Activated CD4-positive, alpha-beta T cell treated with anti-CD3 and anti-CD28 coated beads for 36 hours (primary cell): ENCODE measurements at regions of chr13 and their contacts with region 1.

Region 1: GRCh38 chr13:108508263-108508662 is 121.1 kb upstream of the MYO16 start:
- DNase-seq: no peak
- ATAC-seq: no peak
- H3K4me3 Mint-ChIP-seq: no peak overlapping the region
- H3K27ac Mint-ChIP-seq: no peak overlapping the region
- H3K4me1 Mint-ChIP-seq: no peaks in the 10 kb centered on the region
- H3K27me3 Mint-ChIP-seq: no peaks in the 10 kb centered on the region

Region 2: DNA sequence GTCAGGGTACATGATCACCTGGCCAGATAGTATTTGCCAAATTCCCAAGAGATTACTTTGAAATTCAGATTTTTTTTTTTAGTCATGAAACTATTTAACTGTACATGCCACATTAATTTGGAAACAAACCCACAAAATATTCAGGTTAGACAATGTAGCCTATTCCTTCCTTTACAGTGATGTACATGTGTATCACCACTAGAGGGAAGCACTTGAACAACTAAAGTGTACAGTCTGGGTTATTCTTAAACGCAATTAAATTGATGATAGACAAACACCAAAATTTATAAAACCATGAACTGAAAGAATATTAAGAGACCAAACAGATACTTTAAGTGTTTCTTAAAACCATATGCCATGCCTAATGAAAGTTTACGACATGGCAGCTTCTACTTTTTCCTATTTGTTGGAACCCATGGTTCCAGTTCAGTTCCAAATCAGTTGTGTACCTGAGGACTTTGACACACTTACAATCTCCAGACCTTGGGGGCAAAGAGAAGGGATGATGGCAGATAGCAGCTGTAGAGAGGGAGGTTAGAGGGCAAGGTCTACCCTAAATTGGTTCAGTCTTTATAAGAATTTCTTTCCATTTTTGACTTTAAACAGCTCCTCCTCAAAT is 185.9 kb before region 1 on chr13:
- CTCF ChIA-PET with region 1: interaction called, 3 read pairs
- POLR2A ChIA-PET with region 1: no interaction called
- intact Hi-C with region 1: loop called (anchors 5 kb)
- DNase-seq: no peak
- ATAC-seq: peak; percentile 83
- H3K4me3 Mint-ChIP-seq: no peak overlapping the region
- H3K27ac Mint-ChIP-seq: no peak overlapping the region
- H3K4me1 Mint-ChIP-seq: peaks cover 11% of the 10 kb centered on the region
- H3K27me3 Mint-ChIP-seq: peaks cover 2% of the 10 kb centered on the region